Right ventricle myocardium inferior (tissue), 1 donor: ENCODE measurements at regions of chr6 and their contacts with region 1.

Region 1: DNA sequence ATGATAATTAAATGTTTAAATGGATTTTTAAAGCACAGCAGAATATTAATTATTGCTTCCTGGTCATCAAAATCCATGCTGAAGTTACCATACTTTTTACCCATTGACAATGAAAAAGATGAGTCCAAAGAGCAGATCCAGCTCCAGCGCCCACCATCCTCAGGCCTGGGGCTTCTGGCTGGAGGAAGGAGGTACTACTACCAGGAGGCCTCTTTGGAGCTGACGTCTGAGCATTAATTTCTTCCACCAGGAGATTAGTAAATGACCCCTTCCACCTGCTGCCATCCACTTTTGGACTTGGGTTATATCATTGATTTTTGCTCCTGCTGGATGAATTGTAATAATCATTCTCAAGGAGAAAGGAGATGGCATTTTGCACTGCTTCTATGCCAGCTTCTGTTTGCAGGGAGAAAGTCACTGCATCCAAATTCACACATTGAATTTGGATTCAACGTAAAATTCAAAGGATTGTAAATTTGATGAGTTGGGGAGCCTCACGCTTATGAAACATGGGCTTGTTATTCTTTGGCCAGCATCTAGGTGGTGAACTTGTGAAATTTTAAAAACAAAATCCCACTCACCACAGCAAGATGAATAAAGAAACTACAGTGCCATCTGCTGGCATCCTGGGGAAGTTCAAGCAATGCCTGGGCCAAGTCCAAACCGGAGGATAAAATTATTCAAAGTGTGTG is 121.8 kb downstream of the SASH1 start:
- DNase-seq: no peak
- ATAC-seq: peak; percentile 79

Region 2: DNA sequence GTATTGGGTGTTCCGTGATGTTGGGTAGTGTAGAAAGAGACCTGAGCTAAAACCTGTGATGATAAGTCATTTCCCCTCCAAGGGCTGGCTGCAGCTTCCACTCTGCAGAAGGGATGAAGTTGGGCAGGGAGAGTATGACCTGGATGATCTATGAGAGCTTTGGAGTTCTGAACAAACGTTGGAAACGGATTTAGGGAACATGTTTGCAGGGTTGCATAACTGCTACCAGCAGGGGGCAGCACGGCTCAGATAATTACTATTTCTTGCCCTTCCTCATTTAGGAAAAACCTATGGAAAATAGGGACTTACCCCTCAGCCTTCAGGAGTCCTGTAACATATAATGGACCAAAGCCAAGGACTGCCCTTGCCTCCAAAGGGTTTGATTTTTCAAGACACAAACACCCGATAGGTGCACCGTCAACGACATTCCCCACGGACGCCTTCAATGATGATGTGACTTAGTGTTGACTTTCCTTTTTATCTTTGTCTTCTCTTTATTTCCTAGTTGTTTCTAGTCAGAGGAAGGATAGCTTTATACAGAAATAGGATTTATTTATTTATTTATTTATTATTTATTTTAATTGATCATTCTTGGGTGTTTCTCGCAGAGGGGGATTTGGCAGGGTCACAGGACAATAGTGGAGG is 286.8 kb before region 1 on chr6:
- intact Hi-C with region 1: loop called (anchors 1 kb)
- DNase-seq: peak; percentile 78
- ATAC-seq: peak; percentile 44

Region 3: DNA sequence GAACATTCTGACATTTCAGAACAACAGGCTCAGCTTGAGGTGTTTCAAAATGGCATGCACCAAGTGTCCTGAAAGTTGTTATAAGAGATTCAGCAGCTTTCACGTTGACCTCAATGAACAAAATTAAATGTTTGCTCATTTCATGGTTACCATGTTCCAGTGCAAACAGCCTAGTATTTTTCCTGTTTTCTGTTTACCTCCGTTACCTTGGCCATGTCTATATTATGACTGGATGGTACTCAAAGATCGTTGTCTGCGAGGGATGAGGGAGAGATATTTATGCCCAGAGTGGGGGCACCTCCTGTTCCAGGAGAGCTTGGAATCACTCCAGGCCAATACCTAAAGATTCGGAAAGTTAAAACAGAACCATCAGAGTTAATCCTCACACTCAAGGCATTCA is 205.6 kb before region 1 on chr6:
- intact Hi-C with region 1: loop called (anchors 5 kb)
- DNase-seq: no peak
- ATAC-seq: no peak

Region 4: GRCh38 chr6:148342357-148343046 is 122.0 kb before region 1 on chr6 and contains the start of gene SASH1:
- intact Hi-C with region 1: loop called (anchors 5 kb)
- DNase-seq: peak; percentile 80
- ATAC-seq: peak; percentile 86
- total RNA-seq, gene SASH1: 36.8 TPM

Region 5: DNA sequence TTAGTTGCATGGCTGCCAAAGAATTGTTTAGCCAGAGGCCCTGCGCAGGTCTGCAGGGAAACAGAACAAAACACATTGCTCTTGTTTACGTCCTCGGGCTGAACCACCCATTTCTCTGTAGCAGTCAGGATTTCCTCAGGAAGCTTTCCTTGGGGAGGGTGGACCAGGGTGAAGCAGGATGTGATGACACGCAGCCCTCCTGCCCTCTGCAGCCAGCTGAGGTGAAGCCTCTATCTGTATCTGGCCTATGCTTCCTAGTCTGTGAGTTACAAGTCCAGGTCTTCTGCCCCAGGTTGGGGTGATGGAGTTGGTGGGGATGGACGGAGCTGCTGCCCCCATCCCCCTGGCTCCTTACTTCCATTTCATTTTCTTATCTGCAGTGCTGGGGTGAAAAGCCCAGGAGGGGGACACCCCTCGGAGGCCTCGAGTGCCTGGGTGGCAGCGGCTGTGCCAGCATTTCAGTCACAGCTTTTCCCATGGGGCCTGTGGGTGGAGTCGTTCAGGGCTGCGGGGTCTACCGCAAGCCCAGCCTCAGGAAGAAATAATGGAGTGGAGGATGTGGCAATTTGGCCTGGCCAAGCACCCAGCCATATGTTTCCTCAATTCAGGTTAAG is 96.9 kb before region 1 on chr6:
- intact Hi-C with region 1: loop called (anchors 5 kb)
- DNase-seq: peak; percentile 80
- ATAC-seq: peak; percentile 81

Region 6: DNA sequence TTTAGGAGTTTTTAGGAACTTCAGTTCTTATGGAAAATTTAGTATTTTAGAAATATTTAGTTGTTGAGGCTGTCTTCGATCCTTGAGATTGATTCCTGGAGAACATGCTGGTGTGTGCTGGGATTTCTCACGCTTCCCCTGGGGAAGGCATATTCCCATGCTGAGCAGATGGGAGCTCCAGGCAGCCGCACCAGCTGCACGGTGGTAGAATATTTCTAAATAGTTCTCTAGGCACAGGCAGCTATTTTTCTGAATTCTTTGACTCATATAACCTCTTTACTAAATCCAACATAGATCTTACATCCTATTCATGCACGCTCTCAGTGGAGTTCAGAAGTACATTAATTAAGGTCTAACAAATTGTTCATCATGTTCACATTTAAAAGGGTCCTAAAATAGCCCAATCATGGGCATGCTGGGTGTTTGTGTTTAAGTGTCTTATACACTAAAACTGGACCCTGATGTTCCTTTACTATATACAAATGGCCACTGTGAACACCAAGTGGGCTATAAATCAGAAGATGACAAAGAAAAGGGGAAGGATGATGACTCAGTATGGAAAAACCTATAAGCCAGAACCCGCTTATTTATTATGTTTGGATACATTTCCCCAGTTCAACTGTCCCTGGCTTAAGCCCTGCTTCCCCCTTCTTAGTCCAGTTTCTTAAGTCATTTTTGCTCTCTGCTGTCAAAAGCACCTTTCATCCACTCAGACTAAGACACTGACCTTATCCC is 420.8 kb after region 1 on chr6:
- intact Hi-C with region 1: no loop called
- DNase-seq: no peak
- ATAC-seq: no peak